ENCODE measurements at regions of chr3 and their contacts with region 1.

Region 1: DNA sequence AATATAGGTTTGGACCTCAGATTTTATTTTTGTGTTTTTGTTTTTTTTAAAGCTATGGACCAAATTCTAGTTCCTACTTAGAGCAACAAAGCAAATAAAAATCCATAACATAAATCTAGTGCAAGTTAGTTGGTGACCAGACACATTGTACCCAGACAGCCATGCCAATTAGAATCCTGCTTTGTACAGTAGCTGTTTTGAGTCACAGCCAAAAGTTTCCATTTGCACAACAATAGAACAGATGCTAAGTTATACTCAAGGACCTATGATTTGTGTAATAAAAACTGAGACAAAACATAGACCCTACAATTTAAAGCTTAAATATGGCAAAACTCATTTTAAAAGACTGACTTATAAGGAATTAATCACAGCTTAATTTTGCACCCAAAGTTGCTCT is 513.1 kb upstream of the CBLB start:
- DNase-seq: no peak
- H3K4me3 ChIP-seq: no peak overlapping the region
- H3K27ac ChIP-seq: no peak overlapping the region
- H3K4me1 ChIP-seq: no peaks in the 10 kb centered on the region
- H3K27me3 ChIP-seq: no peaks in the 10 kb centered on the region
- CTCF ChIP-seq: no peak

Region 2: DNA sequence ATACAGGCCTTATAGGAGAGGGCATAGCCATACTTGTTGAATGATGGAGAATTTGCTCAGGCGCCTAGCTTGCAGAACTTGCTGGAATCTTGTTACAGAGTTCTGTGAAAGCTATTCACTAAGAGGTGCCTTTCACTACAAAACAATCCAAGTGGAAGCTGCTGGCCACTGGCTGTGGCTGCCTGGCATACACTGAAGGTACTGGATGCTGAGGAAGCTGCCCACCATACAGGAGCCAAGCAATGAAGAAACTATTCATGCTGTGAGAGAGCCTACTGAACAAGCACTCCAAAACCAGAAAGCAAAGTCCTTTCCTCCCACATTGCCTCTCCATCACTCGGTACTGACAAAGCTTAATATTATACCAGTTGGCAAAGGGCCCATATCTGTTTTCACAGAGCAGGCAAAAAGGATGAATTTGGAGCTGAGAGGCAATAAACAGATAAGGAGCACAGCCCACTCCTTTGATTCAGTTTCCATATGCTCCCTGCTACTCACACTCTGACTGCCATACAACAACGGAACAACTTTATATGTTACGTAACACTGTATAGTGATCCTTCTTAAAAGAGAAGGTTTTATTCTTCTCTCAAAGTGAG is 1207.8 kb before region 1 on chr3:
- intact Hi-C with region 1: loop called (anchors 5 kb)
- DNase-seq: no peak
- H3K4me3 ChIP-seq: no peak overlapping the region
- H3K27ac ChIP-seq: no peak overlapping the region
- H3K4me1 ChIP-seq: no peaks in the 10 kb centered on the region
- H3K27me3 ChIP-seq: no peaks in the 10 kb centered on the region
- CTCF ChIP-seq: no peak

Region 3: GRCh38 chr3:106013971-106014370 is 368.0 kb before region 1 on chr3:
- intact Hi-C with region 1: no loop called
- DNase-seq: no peak
- H3K4me3 ChIP-seq: no peak overlapping the region
- H3K27ac ChIP-seq: no peak overlapping the region
- H3K4me1 ChIP-seq: no peaks in the 10 kb centered on the region
- H3K27me3 ChIP-seq: no peaks in the 10 kb centered on the region
- CTCF ChIP-seq: no peak

Region 4: DNA sequence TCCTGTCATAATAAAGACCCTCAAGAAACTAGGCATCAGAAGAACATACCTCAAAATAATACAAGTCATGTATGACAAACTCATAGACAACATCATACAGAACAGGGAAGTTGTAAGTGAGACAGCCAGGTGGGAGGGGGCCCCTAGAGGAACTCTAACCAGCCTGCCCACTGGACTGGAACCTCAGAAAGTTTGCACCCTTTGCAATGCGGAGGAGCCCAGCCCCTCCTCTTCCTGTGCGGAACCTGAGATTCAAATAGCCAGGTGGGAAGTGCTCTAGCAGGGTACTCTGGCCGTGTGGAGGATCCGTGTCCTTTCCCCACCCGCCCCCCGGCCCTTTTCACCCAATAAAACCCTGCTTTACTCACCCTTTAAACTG is 126.1 kb before region 1 on chr3:
- intact Hi-C with region 1: no loop called
- DNase-seq: no peak
- H3K4me3 ChIP-seq: no peak overlapping the region
- H3K27ac ChIP-seq: no peak overlapping the region
- H3K4me1 ChIP-seq: no peaks in the 10 kb centered on the region
- H3K27me3 ChIP-seq: no peaks in the 10 kb centered on the region
- CTCF ChIP-seq: no peak